Adrenal gland (tissue), 19 donors: ENCODE measurements at regions of chr2 and their contacts with region 1.

Region 1: DNA sequence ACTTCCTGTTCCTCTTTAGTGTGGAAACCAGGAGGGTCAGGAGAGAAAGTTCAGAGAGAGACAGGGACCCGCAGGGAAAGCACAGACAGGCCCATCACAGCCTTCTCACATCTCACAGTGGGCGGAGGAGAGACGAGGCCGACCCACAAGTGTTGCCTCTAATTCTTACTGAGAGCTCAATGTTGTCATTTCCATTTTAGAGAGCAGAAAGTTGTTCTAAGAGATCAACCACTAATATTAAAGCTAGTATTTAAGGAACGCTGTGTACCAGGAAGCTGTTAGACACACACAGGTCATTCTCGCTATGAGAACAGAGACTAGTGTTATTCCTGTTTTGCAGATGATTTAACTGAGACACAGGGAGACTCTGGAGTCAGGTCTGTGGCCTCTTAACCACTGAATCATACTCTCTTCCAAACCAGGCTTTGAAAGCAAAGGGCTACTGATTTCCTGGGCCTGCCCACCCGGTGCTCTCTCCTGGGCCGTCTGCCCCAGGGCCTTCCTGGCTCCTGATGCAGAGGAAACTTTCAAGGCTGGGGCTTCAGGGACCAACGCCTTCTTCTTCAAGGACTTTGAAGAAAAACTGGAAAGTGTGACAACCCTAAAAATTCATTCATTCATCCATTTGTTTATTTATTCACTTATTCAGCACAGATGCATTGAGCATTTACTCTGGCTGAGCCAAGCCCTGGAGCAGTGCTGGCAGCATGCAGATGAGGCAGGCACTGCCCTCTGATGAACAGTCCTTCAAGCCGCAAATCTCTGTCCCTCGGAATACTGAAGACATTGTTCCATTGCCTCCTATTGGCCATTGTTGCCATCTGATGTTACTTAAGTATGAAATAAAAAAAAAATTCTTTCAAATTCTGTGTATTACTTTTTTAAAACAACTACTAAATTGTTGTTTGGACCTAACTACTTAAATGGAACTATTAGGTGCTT is 37.2 kb upstream of the BIN1 start:
- DNase-seq: peak in 6 of 7 donors; percentile 43 to 67 (median 58)
- H3K4me3 ChIP-seq: no peak overlapping the region
- H3K27ac ChIP-seq: peak overlapping the region in 4 of 5 donors; percentile 36 to 66 (median 60)
- H3K4me1 ChIP-seq: peaks cover 19 to 32% of the 10 kb centered on the region in 2 donors
- H3K27me3 ChIP-seq: no peaks in the 10 kb centered on the region
- CTCF ChIP-seq: peak; percentile 13 to 30 (median 26)
- POLR2A ChIP-seq: no peak

Region 2: DNA sequence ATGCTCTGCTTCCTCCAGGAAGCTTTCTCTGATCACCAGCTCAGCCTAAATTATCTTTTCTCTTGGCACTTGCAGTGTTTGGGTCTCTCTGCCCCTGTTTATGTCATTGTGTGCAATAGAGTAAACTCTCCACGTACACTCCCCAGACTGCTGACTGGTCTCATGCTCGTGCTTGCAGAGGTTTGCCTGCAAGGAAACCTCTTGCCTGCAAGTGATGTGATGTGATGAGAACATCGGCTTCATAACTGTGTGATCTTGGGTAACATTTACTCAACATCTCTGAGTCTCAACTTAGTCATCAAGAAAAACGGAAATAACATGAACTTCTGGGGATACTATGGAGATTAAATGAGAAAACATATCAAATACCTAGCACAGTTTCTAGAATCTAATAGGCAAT is 129.5 kb before region 1 on chr2:
- intact Hi-C with region 1: no loop called
- DNase-seq: no peak
- H3K4me3 ChIP-seq: no peak overlapping the region
- H3K27ac ChIP-seq: no peak overlapping the region
- H3K4me1 ChIP-seq: no peaks in the 10 kb centered on the region
- H3K27me3 ChIP-seq: peaks cover 3% of the 10 kb centered on the region
- CTCF ChIP-seq: no peak
- POLR2A ChIP-seq: no peak

Region 3: DNA sequence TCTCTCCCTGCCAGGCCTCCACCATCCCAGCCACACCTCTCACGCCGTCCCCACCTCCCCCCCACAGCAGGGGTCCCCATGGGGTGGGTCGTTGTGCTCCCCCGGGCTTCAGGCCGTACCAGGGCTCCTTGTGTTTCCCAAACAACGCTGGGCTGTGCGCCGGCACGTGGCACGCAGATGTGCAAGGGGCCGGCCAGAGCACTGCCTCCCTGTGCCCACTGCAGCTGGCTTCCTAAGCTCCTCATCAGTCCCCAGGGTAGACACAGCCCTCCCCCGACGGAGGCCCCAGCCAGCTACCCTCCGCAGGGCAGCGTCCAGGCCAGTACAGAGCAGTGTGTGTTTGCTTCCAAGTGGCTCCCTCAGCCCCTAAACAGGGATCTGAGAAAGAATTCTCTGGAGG is 71.1 kb before region 1 on chr2:
- intact Hi-C with region 1: loop called in 1 of 2 experiments (anchors 10 kb)
- DNase-seq: no peak
- H3K4me3 ChIP-seq: no peak overlapping the region
- H3K27ac ChIP-seq: peak overlapping the region in 2 of 5 donors; percentile 41 to 72
- H3K4me1 ChIP-seq: peaks cover 26 to 41% of the 10 kb centered on the region in 2 donors
- H3K27me3 ChIP-seq: no peaks in the 10 kb centered on the region
- CTCF ChIP-seq: no peak
- POLR2A ChIP-seq: no peak